Mammary epithelial cell (primary cell): ENCODE measurements at regions of chr6 and their contacts with region 1.

Region 1: DNA sequence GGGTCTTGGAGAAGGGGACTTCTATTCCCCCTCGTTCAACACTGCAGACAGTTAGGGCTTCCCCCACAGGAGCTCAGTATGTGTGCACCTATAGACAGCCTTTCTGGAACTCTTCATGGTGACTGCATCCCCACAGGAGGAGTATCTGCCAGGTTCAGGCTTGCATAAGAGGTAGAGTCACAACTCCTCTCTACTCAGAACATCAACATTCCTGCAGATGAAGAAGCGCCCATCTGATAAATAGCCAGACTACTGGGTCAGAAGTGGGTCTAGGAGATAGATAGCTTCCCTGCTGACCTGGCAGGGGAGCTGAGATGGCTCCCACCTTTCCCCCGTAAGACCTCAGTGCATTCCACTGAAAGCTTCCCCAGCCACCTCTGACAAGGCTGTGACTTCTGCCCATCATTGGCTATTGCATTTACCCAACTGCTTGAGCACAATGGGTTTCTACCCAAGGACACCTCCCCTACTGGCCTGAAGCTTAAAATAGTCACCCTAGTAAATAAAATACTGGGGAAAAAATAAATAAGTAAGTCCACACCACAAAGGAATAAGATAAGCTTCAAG is 125.1 kb downstream of the CDK19 start:
- DNase-seq: no peak
- H3K4me3 ChIP-seq: no peak overlapping the region
- H3K27ac ChIP-seq: no peak overlapping the region
- H3K4me1 ChIP-seq: peaks cover 13% of the 10 kb centered on the region
- H3K27me3 ChIP-seq: no peaks in the 10 kb centered on the region
- CTCF ChIP-seq: no peak

Region 2: GRCh38 chr6:110746680-110747079 is 56.5 kb after region 1 on chr6:
- CTCF ChIA-PET with region 1: no interaction called
- dilution Hi-C with region 1: loop called (anchors 5 kb)
- in situ Hi-C with region 1: no loop called
- intact Hi-C with region 1: no loop called
- DNase-seq: no peak
- H3K4me3 ChIP-seq: no peak overlapping the region
- H3K27ac ChIP-seq: no peak overlapping the region
- H3K4me1 ChIP-seq: peaks cover 4% of the 10 kb centered on the region
- H3K27me3 ChIP-seq: no peaks in the 10 kb centered on the region
- CTCF ChIP-seq: no peak